ENCODE measurements at regions of chr3 and their contacts with region 1.

Region 1: DNA sequence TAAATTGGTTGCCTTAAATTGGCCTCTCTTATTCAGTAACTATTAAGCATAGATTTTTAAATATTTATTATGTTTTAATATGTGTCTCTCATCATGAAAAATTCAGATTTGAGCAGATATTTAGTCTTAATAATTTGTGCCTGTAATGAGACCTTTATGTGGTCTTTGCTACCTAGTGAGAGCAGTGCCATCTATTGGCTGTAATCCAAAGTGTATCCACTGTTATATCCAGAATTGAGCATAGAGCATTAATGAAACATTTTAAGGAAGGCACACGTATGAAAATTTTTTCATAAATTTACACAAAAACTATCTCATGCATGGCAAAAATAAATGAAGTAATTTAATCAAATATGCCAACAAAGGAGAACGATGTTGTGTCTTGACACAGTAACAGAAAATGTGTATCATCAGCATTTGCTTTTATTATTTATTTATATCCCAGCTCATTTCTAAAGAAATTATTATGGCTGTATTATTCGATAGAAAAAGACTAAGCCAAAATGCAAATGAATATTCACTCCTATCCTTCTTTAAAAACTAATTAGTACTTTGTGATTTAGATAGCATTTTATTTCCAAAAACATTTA is 203.5 kb downstream of the RSRC1 start:
- H3K4me3 Mint-ChIP-seq: no peak overlapping the region
- H3K27ac Mint-ChIP-seq: no peak overlapping the region
- H3K4me1 Mint-ChIP-seq: no peaks in the 10 kb centered on the region
- H3K27me3 Mint-ChIP-seq: no peaks in the 10 kb centered on the region

Region 2: GRCh38 chr3:157618075-157618760 is 695.2 kb before region 1 on chr3:
- intact Hi-C with region 1: loop called (anchors 10 kb)
- H3K4me3 Mint-ChIP-seq: no peak overlapping the region
- H3K27ac Mint-ChIP-seq: no peak overlapping the region
- H3K4me1 Mint-ChIP-seq: no peaks in the 10 kb centered on the region
- H3K27me3 Mint-ChIP-seq: peaks cover 7% of the 10 kb centered on the region

Region 3: GRCh38 chr3:157865352-157866000 is 448.0 kb before region 1 on chr3:
- intact Hi-C with region 1: loop called (anchors 2 kb)
- H3K4me3 Mint-ChIP-seq: no peak overlapping the region
- H3K27ac Mint-ChIP-seq: no peak overlapping the region
- H3K4me1 Mint-ChIP-seq: no peaks in the 10 kb centered on the region
- H3K27me3 Mint-ChIP-seq: no peaks in the 10 kb centered on the region

Region 4: DNA sequence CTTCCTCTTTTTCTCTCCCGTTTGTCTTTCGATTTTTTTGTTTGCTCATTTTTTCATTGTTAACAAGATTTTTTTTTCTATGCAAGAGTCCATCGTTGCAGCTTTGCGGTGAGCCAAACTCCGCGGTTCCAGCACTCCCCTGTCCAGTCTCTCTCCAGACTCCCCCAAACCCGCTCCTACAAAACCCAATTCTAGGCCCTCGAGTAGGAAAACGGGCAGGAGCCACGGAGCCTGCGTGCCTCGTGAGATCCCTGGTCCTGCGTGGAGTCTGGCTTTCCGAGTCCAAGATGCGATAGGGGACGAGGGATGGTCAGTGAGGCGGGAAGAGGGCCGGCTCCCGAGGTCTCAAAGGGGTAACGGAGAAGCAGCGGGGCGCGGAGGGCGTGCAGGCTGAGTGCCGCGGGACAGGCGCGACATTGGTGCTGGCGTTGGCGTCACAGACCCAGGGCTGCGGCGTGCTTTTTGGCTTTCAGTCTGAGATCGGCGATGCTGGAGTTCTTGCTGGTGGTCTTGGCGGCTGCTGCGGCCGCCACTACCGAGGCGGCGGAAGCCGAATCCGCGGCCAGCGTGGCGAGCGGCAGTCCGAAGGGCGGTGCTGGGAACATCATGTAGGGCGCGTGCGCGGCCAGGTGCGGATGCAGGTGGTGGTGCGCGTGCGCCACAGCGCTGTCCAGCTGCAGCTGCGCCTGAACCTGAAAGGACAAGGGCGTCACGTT is 215.7 kb before region 1 on chr3:
- intact Hi-C with region 1: loop called (anchors 10 kb)
- H3K4me3 Mint-ChIP-seq: peak overlapping the region; percentile 77
- H3K27ac Mint-ChIP-seq: peak overlapping the region; percentile 40
- H3K4me1 Mint-ChIP-seq: peaks cover 50% of the 10 kb centered on the region
- H3K27me3 Mint-ChIP-seq: peaks cover 85% of the 10 kb centered on the region

Measured in dendritic cell treated with granulocyte-macrophage colony-stimulating factor and Interleukin-4, amounts not matched to agents 40 ng/mL and 50 ng/mL, for 4 days (primary cell).